ENCODE measurements at regions of chr1 and their contacts with region 1.

Region 1: DNA sequence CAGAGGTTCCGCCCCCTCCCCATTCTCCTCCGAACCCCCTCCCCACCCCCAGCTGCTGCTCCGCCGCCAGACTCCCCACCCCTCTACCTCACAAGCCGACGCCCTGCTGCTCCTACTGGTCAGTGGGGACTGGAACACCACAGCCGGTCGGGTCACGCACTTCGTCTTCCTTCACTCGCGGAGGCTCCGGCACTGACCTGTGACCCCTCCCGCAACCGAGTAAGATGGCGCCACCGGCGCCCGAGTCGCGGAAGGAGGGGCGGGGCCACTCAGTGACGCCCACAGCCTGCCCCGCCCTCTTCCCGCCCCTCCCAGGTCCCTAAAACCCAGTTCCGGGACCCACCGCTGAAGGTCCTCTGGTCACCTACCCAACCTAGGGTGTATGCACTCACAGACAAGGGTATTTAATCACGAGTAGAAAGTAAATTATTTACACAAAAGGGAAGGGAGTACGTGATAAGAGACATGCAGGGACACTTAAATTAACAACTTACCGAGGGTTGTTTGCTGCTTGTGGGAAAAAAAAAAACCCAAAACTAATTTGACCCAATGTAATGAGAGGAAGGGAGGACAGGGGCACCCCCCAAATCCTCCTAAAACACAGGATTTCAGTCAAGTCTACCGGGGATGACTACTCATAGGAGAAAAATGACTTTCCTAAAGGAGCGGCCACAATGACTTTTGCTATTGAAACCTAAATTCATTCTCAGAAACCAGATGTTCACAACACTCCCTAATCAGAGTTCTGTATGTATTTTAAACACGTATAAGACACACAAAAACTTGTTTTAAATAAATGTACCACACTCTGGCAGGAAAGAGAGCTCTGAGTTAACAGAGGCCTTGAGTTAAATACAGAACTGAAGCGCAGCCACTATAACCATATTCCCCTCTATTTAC is at the start of gene RIT1:
- DNase-seq: peak; percentile 88 to 89
- ATAC-seq: peak; percentile 97 to 99 (median 98)
- H3K4me3 ChIP-seq: peak within 1 kb of the TSS; percentile 60 to 85 (median 77)
- H3K27ac ChIP-seq: peak within 1 kb of the TSS; percentile 70 to 96 (median 92)
- H3K4me1 ChIP-seq: peaks cover 2 to 29% (median 12%) of the 10 kb centered on the region in 9 donors
- H3K27me3 ChIP-seq: no peaks in the 10 kb centered on the region
- CTCF ChIP-seq: peak in 1 of 9 donors; percentile 12
- total RNA-seq, gene RIT1: 12.8 to 32.3 (median 21.9) TPM

Region 2: GRCh38 chr1:155657463-155657862 is 253.9 kb before region 1 on chr1:
- intact Hi-C with region 1: loop called in 1 of 10 experiments (anchors 5 kb)
- DNase-seq: no peak
- ATAC-seq: peak in 4 of 8 donors; percentile 13 to 39 (median 30)
- H3K4me3 ChIP-seq: no peak overlapping the region
- H3K27ac ChIP-seq: no peak overlapping the region
- H3K4me1 ChIP-seq: peaks cover 0 to 5% (median 0%) of the 10 kb centered on the region in 9 donors
- H3K27me3 ChIP-seq: no peaks in the 10 kb centered on the region
- CTCF ChIP-seq: no peak

Region 3: GRCh38 chr1:155776404-155776803 is 135.0 kb before region 1 on chr1:
- intact Hi-C with region 1: loop called in 1 of 10 experiments (anchors 10 kb)
- DNase-seq: peak in 1 of 2 donors; percentile 11
- ATAC-seq: peak in 2 of 8 donors; percentile 40 to 49
- H3K4me3 ChIP-seq: no peak overlapping the region
- H3K27ac ChIP-seq: no peak overlapping the region
- H3K4me1 ChIP-seq: no peaks in the 10 kb centered on the region
- H3K27me3 ChIP-seq: no peaks in the 10 kb centered on the region
- CTCF ChIP-seq: no peak

Region 4: GRCh38 chr1:155859234-155859829 is 52.1 kb before region 1 on chr1 and contains the start of gene SYT11:
- intact Hi-C with region 1: loop called in 5 of 10 experiments (anchors 2 to 5 kb)
- DNase-seq: peak; percentile 95 to 96
- ATAC-seq: peak; percentile 87 to 93 (median 92)
- H3K4me3 ChIP-seq: peak within 1 kb of the TSS; percentile 11 to 59 (median 52)
- H3K27ac ChIP-seq: peak within 1 kb of the TSS; percentile 81 to 96 (median 94)
- H3K4me1 ChIP-seq: peaks cover 0 to 50% (median 47%) of the 10 kb centered on the region in 9 donors
- H3K27me3 ChIP-seq: no peaks in the 10 kb centered on the region
- CTCF ChIP-seq: peak in 5 of 9 donors; percentile 11 to 38 (median 18)
- total RNA-seq, gene SYT11: 9.2 to 19.4 (median 12.8) TPM

Measured in heart right ventricle (tissue), 16 donors.